ENCODE measurements at regions of chr1 and their contacts with region 1.

Region 1: DNA sequence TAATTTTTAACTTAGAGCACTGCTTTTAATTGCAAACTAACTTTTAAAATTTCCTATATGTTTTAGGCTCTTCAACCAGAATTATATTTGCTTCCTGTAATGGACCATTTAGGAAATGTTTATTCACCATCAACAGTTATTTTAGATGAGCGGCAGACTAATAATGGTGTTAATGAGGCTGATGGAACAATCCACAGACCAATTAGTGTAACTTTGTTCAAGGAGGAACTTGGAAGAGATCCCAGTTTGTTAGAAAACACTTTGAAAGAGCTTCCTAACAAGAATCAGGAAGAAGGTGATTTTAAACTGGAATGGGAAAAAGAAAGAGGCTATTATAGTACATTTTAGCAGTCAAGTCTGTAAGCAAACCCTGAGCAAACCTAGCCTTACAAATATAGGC is 19.4 kb upstream of the GNG5 start:
- DNase-seq: no peak
- ATAC-seq: no peak
- H3K4me3 ChIP-seq: no peak overlapping the region
- H3K4me3 Mint-ChIP-seq: no peak overlapping the region
- H3K27ac ChIP-seq: no peak overlapping the region
- H3K27ac Mint-ChIP-seq: no peak overlapping the region
- H3K4me1 ChIP-seq: no peaks in the 10 kb centered on the region
- H3K4me1 Mint-ChIP-seq: no peaks in the 10 kb centered on the region
- H3K27me3 ChIP-seq: no peaks in the 10 kb centered on the region
- H3K27me3 Mint-ChIP-seq: no peaks in the 10 kb centered on the region

Region 2: DNA sequence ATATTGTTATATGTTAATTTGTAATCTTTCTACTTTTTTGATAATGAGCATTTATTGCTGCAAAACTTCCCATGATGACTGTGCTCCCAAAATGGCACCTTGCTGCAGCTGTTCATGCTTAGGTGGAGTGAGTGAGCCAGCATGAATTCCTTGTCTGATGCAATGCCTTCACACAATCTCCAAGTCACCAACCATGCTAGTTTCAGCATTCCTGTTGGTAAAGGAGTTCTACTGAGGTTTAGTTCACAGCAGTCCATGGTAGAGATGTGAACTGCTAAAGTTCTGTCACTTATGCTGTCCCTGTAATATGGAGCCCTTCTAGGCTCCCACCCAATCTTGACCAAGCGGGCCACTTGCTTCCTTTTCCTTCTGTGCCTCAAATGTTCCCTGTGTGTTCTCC is 407.9 kb before region 1 on chr1:
- CTCF ChIA-PET with region 1: no interaction called
- POLR2A ChIA-PET with region 1: interaction called in 1 of 2 experiments, 13 read pairs
- DNase-seq: no peak
- ATAC-seq: no peak
- H3K4me3 ChIP-seq: no peak overlapping the region
- H3K4me3 Mint-ChIP-seq: no peak overlapping the region
- H3K27ac ChIP-seq: no peak overlapping the region
- H3K27ac Mint-ChIP-seq: no peak overlapping the region
- H3K4me1 ChIP-seq: no peaks in the 10 kb centered on the region
- H3K4me1 Mint-ChIP-seq: peaks cover 6 to 13% (median 10%) of the 10 kb centered on the region in 3 donors
- H3K27me3 ChIP-seq: no peaks in the 10 kb centered on the region
- H3K27me3 Mint-ChIP-seq: no peaks in the 10 kb centered on the region

Region 3: DNA sequence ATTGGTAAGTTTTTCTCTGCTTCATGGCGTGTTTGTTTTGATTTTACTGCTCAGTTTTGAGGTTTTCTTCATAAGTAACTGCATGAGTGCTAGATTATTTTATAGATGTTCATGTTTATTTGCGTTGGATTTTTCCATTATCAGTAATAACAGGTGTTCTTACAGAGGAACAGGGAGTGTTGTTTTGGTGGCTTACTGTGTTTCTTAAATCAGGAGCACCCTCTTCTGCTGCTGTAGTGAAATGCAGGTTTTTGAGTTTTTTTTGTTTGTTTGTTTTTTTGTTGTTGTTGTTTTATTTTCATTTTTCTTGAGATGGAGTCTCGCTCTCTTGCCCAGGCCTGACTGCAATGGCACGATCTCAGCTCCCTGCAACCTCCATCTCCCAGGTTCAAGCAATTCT is 15.9 kb after region 1 on chr1:
- CTCF ChIA-PET with region 1: no interaction called
- POLR2A ChIA-PET with region 1: no interaction called
- DNase-seq: peak in 1 of 35 experiments; percentile 21
- ATAC-seq: no peak
- H3K4me3 ChIP-seq: no peak overlapping the region
- H3K4me3 Mint-ChIP-seq: no peak overlapping the region
- H3K27ac ChIP-seq: no peak overlapping the region
- H3K27ac Mint-ChIP-seq: no peak overlapping the region
- H3K4me1 ChIP-seq: no peaks in the 10 kb centered on the region
- H3K4me1 Mint-ChIP-seq: peaks cover 0 to 5% (median 0%) of the 10 kb centered on the region in 3 donors
- H3K27me3 ChIP-seq: no peaks in the 10 kb centered on the region
- H3K27me3 Mint-ChIP-seq: no peaks in the 10 kb centered on the region